SK-N-SH (cell line): ENCODE measurements at regions of chr7 and their contacts with region 1.

Region 1: DNA sequence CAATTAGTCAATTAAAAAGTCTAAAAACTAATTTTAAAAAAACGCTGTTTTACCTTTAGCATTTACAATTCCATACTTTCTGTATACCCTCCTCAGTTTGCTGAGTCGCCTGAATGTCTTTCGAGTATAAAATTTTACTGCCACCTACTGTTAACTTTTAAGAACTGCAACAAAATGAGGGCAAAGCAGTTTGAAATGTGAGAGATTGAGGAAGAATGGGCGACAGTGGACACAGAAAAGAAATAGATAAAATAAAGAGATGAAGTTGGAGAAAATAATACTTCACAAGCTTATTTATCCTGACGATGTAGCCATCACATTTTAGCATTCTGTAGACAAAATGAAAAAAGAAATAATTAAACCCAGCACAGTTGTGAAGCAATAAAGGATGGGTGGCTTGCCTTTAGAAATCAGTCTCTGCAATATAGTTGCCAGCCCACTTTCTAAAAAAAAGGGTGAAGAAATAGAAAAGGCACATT is 110.8 kb upstream of the PTN start:
- DNase-seq: peak; percentile 57
- H3K4me3 ChIP-seq: no peak overlapping the region
- H3K27ac ChIP-seq: no peak overlapping the region
- H3K4me1 ChIP-seq: no peaks in the 10 kb centered on the region; a peak in 1 of 4 replicates
- H3K27me3 ChIP-seq: no peaks in the 10 kb centered on the region
- CTCF ChIP-seq: peak; percentile 96
- EP300 ChIP-seq: no peak
- RAD21 ChIP-seq: peak; percentile 94

Region 2: DNA sequence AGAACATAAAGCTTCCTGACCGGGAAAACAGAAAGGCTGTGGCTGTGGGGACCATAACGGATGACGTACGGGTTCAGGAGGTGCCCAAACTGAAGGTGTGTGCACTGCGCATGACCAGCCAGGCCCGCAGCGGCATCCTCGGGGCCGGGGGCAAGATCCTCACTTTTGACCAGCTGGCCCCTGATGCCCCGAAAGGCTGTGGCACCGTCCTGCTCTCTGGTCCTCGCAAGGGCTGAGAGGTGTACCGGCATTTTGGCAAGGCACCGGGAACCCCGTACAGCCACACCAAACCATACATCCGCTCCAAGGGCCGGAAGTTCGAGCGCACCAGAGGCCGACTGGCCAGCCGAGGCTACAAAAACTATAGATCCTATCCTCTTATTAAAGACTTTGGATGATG is 290.0 kb before region 1 on chr7:
- CTCF ChIA-PET with region 1: interaction called, 149 read pairs
- POLR2A ChIA-PET with region 1: no interaction called
- DNase-seq: no peak
- H3K4me3 ChIP-seq: no peak overlapping the region
- H3K27ac ChIP-seq: no peak overlapping the region
- H3K4me1 ChIP-seq: peaks cover 0 to under 1% of the 10 kb centered on the region in 2 experiments; a peak in 2 of 4 replicates
- H3K27me3 ChIP-seq: no peaks in the 10 kb centered on the region
- CTCF ChIP-seq: no peak
- EP300 ChIP-seq: no peak
- RAD21 ChIP-seq: no peak

Region 3: GRCh38 chr7:137846827-137847567 is 392.7 kb after region 1 on chr7 and contains the start of gene DGKI:
- CTCF ChIA-PET with region 1: no interaction called
- POLR2A ChIA-PET with region 1: no interaction called
- DNase-seq: peak; percentile 99
- H3K4me3 ChIP-seq: peak within 1 kb of the TSS; percentile 72 to 82
- H3K27ac ChIP-seq: peak within 1 kb of the TSS in 1 of 2 experiments; percentile 87; a peak in 2 of 4 replicates
- H3K4me1 ChIP-seq: peaks cover 14 to 30% of the 10 kb centered on the region in 2 experiments; a peak in 3 of 4 replicates
- H3K27me3 ChIP-seq: no peaks in the 10 kb centered on the region
- CTCF ChIP-seq: no peak
- EP300 ChIP-seq: 0 out of 4 replicates have a peak, but pooled peaks of 1 of the 2 experiments have one; percentile 6
- RAD21 ChIP-seq: peak; percentile 6; the same call in 1 of the 2 replicates
- polyA plus RNA-seq, gene DGKI: 1.3 and 1.4 TPM in 2 replicates

Region 4: GRCh38 chr7:137975221-137975620 is 520.9 kb after region 1 on chr7:
- CTCF ChIA-PET with region 1: no interaction called
- POLR2A ChIA-PET with region 1: no interaction called
- DNase-seq: no peak
- H3K4me3 ChIP-seq: no peak overlapping the region
- H3K27ac ChIP-seq: peak overlapping the region; percentile 1 to 16; a peak in 1 of 4 replicates
- H3K4me1 ChIP-seq: peaks cover 25 to 27% of the 10 kb centered on the region in 2 experiments
- H3K27me3 ChIP-seq: no peaks in the 10 kb centered on the region
- CTCF ChIP-seq: no peak
- EP300 ChIP-seq: no peak
- RAD21 ChIP-seq: no peak